GM12878 (cell line): ENCODE measurements at regions of chr10 and their contacts with region 1.

Region 1: DNA sequence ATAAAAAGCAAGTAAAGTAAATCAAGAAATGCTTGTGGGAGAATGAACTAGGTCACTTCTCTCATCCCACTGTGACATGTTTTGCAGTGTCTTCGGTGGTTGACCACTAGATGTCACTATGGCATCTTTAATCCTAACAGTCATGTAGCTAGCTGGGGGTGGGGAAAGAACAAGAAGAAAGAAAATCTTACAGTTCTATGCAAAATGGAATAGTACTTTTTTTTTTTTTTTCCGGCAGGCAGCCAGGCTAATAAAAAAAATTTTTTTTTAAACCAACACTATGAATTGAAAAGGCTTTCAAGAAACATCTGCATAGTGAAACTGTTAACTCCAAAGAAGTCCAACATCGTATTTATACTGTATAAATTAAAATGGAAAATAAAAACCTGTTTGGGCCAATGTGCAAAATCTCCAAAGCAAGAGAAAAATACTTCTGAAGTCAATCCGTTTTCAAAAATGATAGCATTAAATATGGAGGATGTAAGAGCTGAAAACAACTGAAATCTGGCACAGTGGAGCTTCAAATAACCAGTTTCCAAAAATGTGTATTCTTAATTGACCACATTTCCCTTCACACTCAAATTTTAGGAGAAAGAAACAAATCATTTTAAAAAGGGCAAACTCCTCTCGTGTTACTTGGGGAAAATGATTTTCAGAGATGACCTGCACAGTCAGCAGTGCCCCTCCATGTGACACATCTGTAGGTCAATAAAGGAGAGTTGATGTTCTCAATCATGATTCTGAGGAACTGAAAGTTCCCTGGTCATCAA is 38.5 kb downstream of the CDK1 start:
- DNase-seq: peak; percentile 26
- ATAC-seq: peak; percentile 85
- H3K4me3 ChIP-seq: no peak overlapping the region
- H3K27ac ChIP-seq: no peak overlapping the region
- H3K4me1 ChIP-seq: no peaks in the 10 kb centered on the region
- H3K27me3 ChIP-seq: no peaks in the 10 kb centered on the region
- CTCF ChIP-seq: peak; percentile 74 to 90 (median 80)
- EP300 ChIP-seq: no peak
- POLR2A ChIP-seq: no peak
- RAD21 ChIP-seq: peak; percentile 91

Region 2: GRCh38 chr10:61188691-61189090 is 371.9 kb after region 1 on chr10:
- CTCF ChIA-PET with region 1: interaction called, 9 read pairs
- POLR2A ChIA-PET with region 1: no interaction called
- RAD21 ChIA-PET with region 1: no interaction called
- SMC1A ChIA-PET with region 1: interaction called, 3 read pairs
- in situ Hi-C with region 1: no loop called
- intact Hi-C with region 1: loop called (anchors 1 kb)
- DNase-seq: no peak
- ATAC-seq: no peak
- H3K4me3 ChIP-seq: no peak overlapping the region
- H3K27ac ChIP-seq: no peak overlapping the region
- H3K4me1 ChIP-seq: no peaks in the 10 kb centered on the region
- H3K27me3 ChIP-seq: no peaks in the 10 kb centered on the region
- CTCF ChIP-seq: no peak
- EP300 ChIP-seq: no peak
- POLR2A ChIP-seq: no peak
- RAD21 ChIP-seq: no peak

Region 3: DNA sequence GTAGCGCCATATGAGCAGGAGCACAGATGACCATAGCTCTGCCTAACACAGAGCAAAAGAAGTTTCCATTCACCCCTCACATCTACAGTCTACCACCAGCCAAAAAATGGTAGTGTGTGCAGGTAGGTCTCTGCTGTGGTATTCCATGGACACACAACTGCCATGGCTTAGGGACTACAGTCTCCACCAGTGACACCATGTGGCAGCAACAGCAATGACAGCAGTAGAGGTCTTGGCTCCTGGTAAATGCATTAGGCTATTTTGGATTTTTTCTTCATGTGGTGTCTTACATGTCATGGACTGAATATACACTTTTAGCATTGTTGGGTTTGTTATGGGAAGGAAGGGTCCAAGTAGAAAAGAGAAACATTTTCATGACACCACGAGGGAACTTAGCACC is 775.8 kb after region 1 on chr10:
- CTCF ChIA-PET with region 1: no interaction called
- POLR2A ChIA-PET with region 1: no interaction called
- RAD21 ChIA-PET with region 1: no interaction called
- SMC1A ChIA-PET with region 1: no interaction called
- in situ Hi-C with region 1: no loop called
- intact Hi-C with region 1: loop called (anchors 5 kb)
- DNase-seq: no peak
- ATAC-seq: peak; percentile 80
- H3K4me3 ChIP-seq: no peak overlapping the region
- H3K27ac ChIP-seq: no peak overlapping the region
- H3K4me1 ChIP-seq: no peaks in the 10 kb centered on the region
- H3K27me3 ChIP-seq: no peaks in the 10 kb centered on the region; a peak in 1 of 4 replicates
- CTCF ChIP-seq: peak; percentile 46 to 55 (median 51); a peak in 5 of 6 replicates
- EP300 ChIP-seq: no peak
- POLR2A ChIP-seq: no peak
- RAD21 ChIP-seq: peak; percentile 30; the same call in 1 of the 2 replicates

Region 4: GRCh38 chr10:61733358-61733940 is 916.6 kb after region 1 on chr10:
- CTCF ChIA-PET with region 1: interaction called, 6 read pairs
- POLR2A ChIA-PET with region 1: no interaction called
- RAD21 ChIA-PET with region 1: no interaction called
- SMC1A ChIA-PET with region 1: no interaction called
- in situ Hi-C with region 1: loop called (anchors 10 kb)
- intact Hi-C with region 1: loop called (anchors 2 kb)
- DNase-seq: no peak
- ATAC-seq: peak; percentile 59
- H3K4me3 ChIP-seq: no peak overlapping the region
- H3K27ac ChIP-seq: no peak overlapping the region
- H3K4me1 ChIP-seq: no peaks in the 10 kb centered on the region
- H3K27me3 ChIP-seq: peaks cover 0 to 4% of the 10 kb centered on the region in 2 experiments; a peak in 1 of 4 replicates
- CTCF ChIP-seq: peak; percentile 38 to 48 (median 44); a peak in 5 of 6 replicates
- EP300 ChIP-seq: no peak
- POLR2A ChIP-seq: no peak
- RAD21 ChIP-seq: peak; percentile 44